ENCODE measurements at regions of chr7 and their contacts with region 1.

Region 1: GRCh38 chr7:105473163-105473562 is 48.9 kb downstream of the PUS7 start:
- DNase-seq: no peak
- ATAC-seq: no peak
- H3K4me3 ChIP-seq: no peak overlapping the region
- H3K27ac ChIP-seq: no peak overlapping the region
- H3K4me1 ChIP-seq: no peaks in the 10 kb centered on the region
- H3K27me3 ChIP-seq: no peaks in the 10 kb centered on the region
- CTCF ChIP-seq: no peak

Region 2: GRCh38 chr7:104367926-104368325 is 1105.2 kb before region 1 on chr7:
- CTCF ChIA-PET with region 1: no interaction called
- POLR2A ChIA-PET with region 1: no interaction called
- in situ Hi-C with region 1: no loop called
- intact Hi-C with region 1: no loop called
- DNase-seq: no peak
- ATAC-seq: no peak
- H3K4me3 ChIP-seq: no peak overlapping the region
- H3K27ac ChIP-seq: no peak overlapping the region
- H3K4me1 ChIP-seq: no peaks in the 10 kb centered on the region
- H3K27me3 ChIP-seq: no peaks in the 10 kb centered on the region
- CTCF ChIP-seq: no peak

Region 3: DNA sequence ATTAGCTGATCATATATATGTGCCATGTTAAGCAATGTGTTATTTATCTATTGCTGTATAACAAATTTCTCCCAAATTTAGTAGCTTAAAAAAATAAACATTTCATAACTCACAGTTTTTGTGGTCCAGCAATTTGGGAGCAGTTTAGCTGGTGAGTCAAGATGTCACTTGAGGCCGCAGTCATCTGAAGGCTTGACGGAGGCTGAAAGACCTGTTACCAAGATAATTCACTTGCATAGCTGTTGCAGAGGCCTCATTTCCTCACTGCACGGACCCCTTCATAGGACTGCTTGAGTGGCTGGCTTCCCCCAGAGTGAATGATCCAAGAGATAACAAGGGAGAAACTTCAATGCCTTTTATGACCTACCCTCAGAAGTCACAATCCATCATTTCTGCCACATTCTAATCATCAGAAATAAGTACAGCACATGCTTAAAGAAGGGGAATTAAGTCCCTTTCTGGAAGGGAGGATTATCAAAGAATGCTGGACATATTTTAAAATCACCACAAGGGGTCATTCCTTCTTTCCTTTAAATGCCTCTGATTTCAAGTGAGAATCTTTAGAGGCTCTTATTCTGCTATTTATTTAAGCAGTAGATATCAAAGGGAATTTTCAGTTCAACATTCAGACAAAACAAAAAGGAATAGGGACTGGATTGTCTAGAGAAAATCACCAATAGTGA is 74.0 kb before region 1 on chr7:
- CTCF ChIA-PET with region 1: no interaction called
- POLR2A ChIA-PET with region 1: interaction called, 14 read pairs
- in situ Hi-C with region 1: no loop called
- intact Hi-C with region 1: no loop called
- DNase-seq: no peak
- ATAC-seq: no peak; the same call in 1 of the 2 replicates
- H3K4me3 ChIP-seq: no peak overlapping the region
- H3K27ac ChIP-seq: no peak overlapping the region
- H3K4me1 ChIP-seq: no peaks in the 10 kb centered on the region
- H3K27me3 ChIP-seq: no peaks in the 10 kb centered on the region
- CTCF ChIP-seq: no peak